ENCODE measurements at regions of chr1 and their contacts with region 1.

Region 1: DNA sequence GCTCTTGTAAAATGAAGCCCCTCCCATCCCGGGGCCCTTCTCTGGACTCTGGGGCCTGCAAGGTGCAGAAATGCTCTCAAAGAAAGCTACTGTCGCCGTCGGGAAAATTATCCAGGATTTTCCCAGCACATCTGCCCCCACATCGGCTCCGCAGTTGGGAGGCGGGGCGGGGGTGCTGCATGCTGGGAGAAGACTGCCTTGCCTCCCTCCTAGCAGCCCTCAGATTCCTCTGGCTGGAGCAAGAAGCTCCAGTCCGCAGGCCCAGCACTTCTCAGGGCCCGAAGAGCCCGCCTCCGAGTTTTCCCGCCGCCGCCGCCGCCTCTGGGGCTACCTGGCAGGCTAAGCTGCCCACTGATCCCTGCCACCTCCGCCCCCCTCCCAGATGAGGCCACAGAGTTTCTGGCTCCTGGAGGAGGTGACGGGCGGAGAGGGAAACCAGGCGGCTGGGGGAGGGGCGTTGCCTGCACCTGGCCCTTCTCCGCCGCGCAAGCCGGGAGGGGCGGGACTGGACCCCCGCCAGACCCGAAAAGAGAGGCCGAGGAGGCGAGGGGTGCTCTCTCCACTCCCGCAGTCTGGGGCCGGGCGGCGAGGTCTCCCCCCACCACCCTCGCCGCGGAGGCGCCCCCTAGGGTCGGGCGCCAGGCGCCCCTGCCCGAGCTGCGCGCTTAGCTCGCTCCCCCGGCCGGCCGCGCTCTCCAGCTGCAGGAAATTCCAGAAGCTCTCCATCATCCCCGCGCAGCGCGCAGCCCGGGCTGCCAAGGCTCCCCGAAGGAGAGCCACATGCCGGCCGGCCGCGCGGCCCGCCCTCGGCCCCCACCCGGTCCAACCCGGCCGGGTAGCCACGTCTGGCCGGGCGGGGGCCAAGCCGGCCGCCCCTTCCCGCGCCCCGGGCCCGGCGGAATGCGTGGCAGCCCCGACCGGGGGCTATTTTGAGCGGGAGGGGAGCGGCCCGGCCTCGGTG is 28.8 kb downstream of the AHDC1 start:
- H3K4me3 ChIP-seq: peak overlapping the region; percentile 36
- H3K27ac ChIP-seq: peak overlapping the region; percentile 53
- H3K4me1 ChIP-seq: peaks cover 9% of the 10 kb centered on the region
- CTCF ChIP-seq: peak; percentile 93

Region 2: DNA sequence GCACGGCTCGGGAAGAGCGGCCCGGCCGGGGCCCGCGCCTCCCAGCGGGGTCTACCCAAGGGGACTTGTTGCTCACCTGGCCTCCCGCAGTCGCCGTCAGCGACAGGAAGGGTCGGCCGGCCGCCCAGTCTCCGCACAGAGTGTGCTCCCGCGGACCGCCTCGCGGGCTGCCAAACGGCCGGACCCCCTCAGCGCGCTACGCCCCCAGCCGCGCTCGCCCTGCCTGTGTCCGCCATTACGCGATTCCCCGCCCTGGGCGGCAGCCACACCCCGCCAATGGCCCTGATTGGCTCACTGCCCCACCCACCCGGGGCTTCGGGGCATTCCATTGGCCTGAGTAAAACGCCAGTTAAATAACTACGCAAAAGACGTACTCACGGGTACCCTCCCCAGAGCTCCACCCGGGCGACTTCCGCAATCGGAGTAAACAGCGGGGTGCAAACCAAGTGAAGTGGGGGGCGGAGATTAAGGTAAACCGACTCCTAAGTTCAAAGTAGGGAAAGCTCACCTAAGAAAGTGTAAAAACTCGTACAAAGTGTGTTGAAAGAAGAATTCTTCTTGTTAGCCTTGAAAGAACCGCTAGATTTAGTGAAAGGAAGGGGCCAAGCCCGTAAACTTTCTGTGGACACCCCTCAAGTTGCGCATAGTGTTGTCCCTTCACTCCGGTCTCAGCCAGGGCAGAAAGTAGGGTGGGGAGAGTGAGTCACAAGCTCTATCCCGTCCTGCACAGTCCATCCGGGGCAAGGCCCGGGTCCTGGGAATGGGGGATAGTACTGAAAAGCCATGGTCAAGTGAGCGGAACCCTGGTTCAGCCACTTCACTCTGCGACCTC is 85.0 kb before region 1 on chr1 and contains the start of gene WASF2:
- CTCF ChIA-PET with region 1: no interaction called
- POLR2A ChIA-PET with region 1: interaction called, 11 read pairs
- H3K4me3 ChIP-seq: peak within 1 kb of the TSS; percentile 86
- H3K27ac ChIP-seq: peak within 1 kb of the TSS; percentile 81
- H3K4me1 ChIP-seq: peaks cover 3% of the 10 kb centered on the region; the same call in 1 of the 2 replicates
- CTCF ChIP-seq: peak; percentile 54; the same call in 1 of the 2 replicates

Region 3: GRCh38 chr1:27614043-27614624 is 39.0 kb after region 1 on chr1:
- CTCF ChIA-PET with region 1: no interaction called
- POLR2A ChIA-PET with region 1: no interaction called
- H3K4me3 ChIP-seq: no peak overlapping the region
- H3K27ac ChIP-seq: no peak overlapping the region
- H3K4me1 ChIP-seq: no peaks in the 10 kb centered on the region
- CTCF ChIP-seq: no peak

Region 4: DNA sequence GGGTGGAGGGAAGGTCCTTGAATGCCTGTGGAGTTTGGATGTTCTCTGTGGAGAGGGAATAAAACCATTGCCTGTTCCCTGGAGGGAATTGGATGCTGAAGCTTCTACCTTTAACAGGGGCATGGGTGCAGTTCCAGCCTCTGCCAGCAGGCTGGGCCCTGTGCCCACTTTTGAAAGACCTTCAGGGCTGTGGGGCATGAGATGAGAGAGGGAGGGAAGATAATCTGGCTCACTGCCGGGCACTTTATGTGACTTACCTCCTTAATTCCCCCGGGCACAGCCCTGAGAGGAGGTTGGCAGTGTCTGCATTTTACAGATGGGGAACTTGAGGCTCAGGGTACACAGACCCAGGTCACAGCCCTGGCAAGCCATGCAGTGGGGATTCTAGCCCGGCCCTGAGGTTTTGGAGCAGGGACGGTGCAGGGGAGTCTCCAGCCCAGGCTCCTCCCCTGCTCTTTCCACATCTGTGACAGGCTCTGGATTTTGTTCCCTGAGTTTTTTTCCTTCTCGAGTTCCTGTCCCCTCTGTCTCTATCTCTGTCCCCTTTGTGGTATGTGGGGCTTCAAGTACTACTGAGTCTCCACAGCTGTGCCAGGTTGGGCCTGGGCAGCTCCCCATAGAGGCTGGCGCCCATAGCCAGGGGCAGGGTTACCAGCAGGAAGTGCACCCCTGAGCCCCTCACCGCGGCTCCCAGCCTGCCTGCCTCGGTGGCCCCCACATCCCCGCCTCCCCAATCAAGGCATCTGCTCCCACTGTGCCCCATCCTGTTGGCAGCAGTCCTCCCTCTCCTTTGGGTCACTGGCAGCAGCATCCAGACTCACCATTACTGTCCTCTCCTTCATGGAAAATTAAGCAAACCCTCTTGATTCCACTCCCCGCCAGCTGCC is 283.2 kb after region 1 on chr1:
- CTCF ChIA-PET with region 1: no interaction called
- POLR2A ChIA-PET with region 1: no interaction called
- H3K4me3 ChIP-seq: no peak overlapping the region
- H3K27ac ChIP-seq: no peak overlapping the region
- H3K4me1 ChIP-seq: no peaks in the 10 kb centered on the region
- CTCF ChIP-seq: peak; percentile 89